ENCODE measurements at regions of chr10 and their contacts with region 1.

Region 1: DNA sequence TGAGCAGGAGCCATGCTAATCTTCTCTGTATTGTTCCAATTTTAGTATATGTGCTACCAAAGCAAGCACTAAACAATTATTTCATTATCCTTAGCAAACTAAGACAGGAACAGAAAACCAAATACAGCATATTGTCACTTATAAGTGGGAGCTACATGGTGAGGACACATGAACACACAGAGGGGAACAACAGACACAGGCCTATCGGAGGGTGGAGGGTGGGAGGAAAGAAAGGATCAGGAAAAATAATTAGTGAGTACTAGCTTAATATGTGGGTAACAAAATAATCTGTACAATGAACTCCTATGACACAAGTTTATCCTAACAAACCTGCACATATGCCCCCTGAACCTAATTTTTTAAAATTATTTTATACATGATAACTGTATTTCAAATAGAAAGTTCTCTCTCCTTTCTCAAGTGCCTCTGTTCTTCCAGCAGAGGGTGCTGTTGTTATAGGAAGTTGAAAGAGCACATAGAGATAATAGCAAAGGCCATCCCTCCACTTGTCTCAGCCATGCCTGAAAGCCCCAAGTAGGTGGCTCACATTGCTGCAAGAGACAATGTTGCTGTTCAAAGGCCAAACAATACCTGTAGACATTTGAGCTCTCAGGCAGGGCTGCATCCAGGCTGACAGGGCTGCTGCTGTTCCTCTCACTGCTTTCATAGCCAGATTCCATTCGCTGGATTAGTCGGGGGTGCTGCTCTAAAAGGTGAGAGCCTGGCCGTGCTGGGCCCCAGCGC is 33.4 kb upstream of the PPP3CB start:
- DNase-seq: peak; percentile 86 to 87
- H3K4me3 ChIP-seq: no peak overlapping the region
- H3K4me3 Mint-ChIP-seq: no peak overlapping the region
- H3K27ac Mint-ChIP-seq: no peak overlapping the region
- H3K4me1 ChIP-seq: peaks cover 3% of the 10 kb centered on the region; the same call in 1 of the 2 replicates
- H3K4me1 Mint-ChIP-seq: peaks cover 8% of the 10 kb centered on the region
- H3K27me3 ChIP-seq: no peaks in the 10 kb centered on the region
- H3K27me3 Mint-ChIP-seq: no peaks in the 10 kb centered on the region
- CTCF ChIP-seq: peak; percentile 89 to 92

Region 2: GRCh38 chr10:71835671-71836595 is 1693.3 kb before region 1 on chr10:
- CTCF ChIA-PET with region 1: interaction called, 8 read pairs
- POLR2A ChIA-PET with region 1: no interaction called
- intact Hi-C with region 1: loop called (anchors 1 kb)
- DNase-seq: no peak
- H3K4me3 ChIP-seq: no peak overlapping the region
- H3K4me3 Mint-ChIP-seq: no peak overlapping the region
- H3K27ac Mint-ChIP-seq: peak overlapping the region; percentile 46
- H3K4me1 ChIP-seq: peaks cover 56% of the 10 kb centered on the region
- H3K4me1 Mint-ChIP-seq: peaks cover 48% of the 10 kb centered on the region
- H3K27me3 ChIP-seq: no peaks in the 10 kb centered on the region
- H3K27me3 Mint-ChIP-seq: no peaks in the 10 kb centered on the region
- CTCF ChIP-seq: no peak

Region 3: DNA sequence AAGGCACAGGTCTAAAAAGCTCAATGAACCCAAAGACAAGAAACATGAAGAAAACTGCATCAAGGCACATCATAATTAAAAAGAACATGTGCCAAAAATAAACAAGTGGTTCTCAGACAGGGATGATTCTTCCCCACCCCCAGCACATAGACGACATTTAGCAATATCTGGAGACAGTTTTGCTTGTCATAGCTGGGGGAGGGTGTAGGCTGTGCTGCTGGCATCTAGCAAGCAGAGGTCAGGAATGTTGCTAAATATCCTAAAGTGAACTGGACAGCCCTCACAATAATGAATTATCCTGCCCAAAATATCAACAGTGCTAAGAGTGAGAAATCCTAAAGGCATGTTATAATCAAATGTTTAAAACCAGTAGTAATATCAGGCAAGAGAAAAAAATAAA is 1026.0 kb before region 1 on chr10:
- CTCF ChIA-PET with region 1: no interaction called
- POLR2A ChIA-PET with region 1: no interaction called
- intact Hi-C with region 1: no loop called
- DNase-seq: no peak
- H3K4me3 ChIP-seq: no peak overlapping the region
- H3K4me3 Mint-ChIP-seq: no peak overlapping the region
- H3K27ac Mint-ChIP-seq: no peak overlapping the region
- H3K4me1 ChIP-seq: no peaks in the 10 kb centered on the region
- H3K4me1 Mint-ChIP-seq: no peaks in the 10 kb centered on the region
- H3K27me3 ChIP-seq: no peaks in the 10 kb centered on the region
- H3K27me3 Mint-ChIP-seq: no peaks in the 10 kb centered on the region
- CTCF ChIP-seq: no peak

Region 4: DNA sequence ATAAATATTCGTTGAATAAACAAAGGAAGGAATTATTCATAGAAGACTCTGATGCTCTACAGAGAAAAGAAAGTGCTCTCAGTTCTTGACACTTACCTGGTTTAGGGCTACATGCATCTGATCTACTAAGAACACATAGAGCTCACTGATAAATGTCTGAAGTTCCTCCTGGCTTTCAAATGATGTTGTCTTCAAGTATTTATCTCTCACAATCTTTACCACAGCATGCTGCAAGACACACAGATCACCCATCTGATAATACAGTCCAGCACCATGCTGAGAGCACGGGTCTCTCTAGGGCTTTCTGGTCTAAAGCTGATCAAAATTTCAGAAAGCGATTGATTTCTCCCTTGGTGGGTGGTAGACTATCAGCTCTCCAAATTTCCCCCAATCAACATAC is 232.3 kb before region 1 on chr10:
- CTCF ChIA-PET with region 1: no interaction called
- POLR2A ChIA-PET with region 1: no interaction called
- intact Hi-C with region 1: no loop called
- DNase-seq: no peak
- H3K4me3 ChIP-seq: no peak overlapping the region
- H3K4me3 Mint-ChIP-seq: no peak overlapping the region
- H3K27ac Mint-ChIP-seq: no peak overlapping the region
- H3K4me1 ChIP-seq: no peaks in the 10 kb centered on the region
- H3K4me1 Mint-ChIP-seq: no peaks in the 10 kb centered on the region
- H3K27me3 ChIP-seq: no peaks in the 10 kb centered on the region
- H3K27me3 Mint-ChIP-seq: peaks cover 20% of the 10 kb centered on the region
- CTCF ChIP-seq: no peak

Region 5: DNA sequence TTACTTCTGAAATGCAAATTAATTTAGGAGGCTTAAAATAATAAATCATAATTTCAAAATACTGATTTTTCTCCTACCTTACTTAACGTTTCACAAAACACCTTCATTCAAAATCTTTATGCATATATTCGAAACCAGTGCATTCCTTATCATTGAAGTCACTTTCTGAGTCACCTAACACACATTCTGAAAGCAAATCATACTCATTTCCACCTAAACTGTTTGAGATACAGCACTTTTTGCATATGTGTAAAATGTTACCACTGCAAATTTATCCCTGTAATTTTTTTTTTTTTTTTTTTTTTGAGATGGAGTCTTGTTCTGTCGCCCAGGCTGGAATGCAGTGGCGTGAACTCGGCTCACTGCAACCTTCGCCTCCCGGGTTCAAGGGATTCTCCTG is 49.1 kb before region 1 on chr10:
- CTCF ChIA-PET with region 1: no interaction called
- POLR2A ChIA-PET with region 1: no interaction called
- intact Hi-C with region 1: no loop called
- DNase-seq: no peak
- H3K4me3 ChIP-seq: no peak overlapping the region
- H3K4me3 Mint-ChIP-seq: no peak overlapping the region
- H3K27ac Mint-ChIP-seq: no peak overlapping the region
- H3K4me1 ChIP-seq: no peaks in the 10 kb centered on the region
- H3K4me1 Mint-ChIP-seq: no peaks in the 10 kb centered on the region
- H3K27me3 ChIP-seq: no peaks in the 10 kb centered on the region
- H3K27me3 Mint-ChIP-seq: no peaks in the 10 kb centered on the region
- CTCF ChIP-seq: no peak

Region 6: GRCh38 chr10:73586583-73586984 is 57.3 kb after region 1 on chr10:
- CTCF ChIA-PET with region 1: interaction called, 18 read pairs
- POLR2A ChIA-PET with region 1: no interaction called
- intact Hi-C with region 1: loop called (anchors 1 kb)
- DNase-seq: peak; percentile 73 to 84
- H3K4me3 ChIP-seq: no peak overlapping the region
- H3K4me3 Mint-ChIP-seq: peak overlapping the region; percentile 37
- H3K27ac Mint-ChIP-seq: peak overlapping the region; percentile 39
- H3K4me1 ChIP-seq: peaks cover 47% of the 10 kb centered on the region
- H3K4me1 Mint-ChIP-seq: peaks cover 56% of the 10 kb centered on the region
- H3K27me3 ChIP-seq: no peaks in the 10 kb centered on the region
- H3K27me3 Mint-ChIP-seq: no peaks in the 10 kb centered on the region
- CTCF ChIP-seq: no peak

Region 7: GRCh38 chr10:73601486-73601921 is 72.2 kb after region 1 on chr10:
- CTCF ChIA-PET with region 1: interaction called, 12 read pairs
- POLR2A ChIA-PET with region 1: no interaction called
- intact Hi-C with region 1: no loop called
- DNase-seq: peak; percentile 77 to 81
- H3K4me3 ChIP-seq: no peak overlapping the region
- H3K4me3 Mint-ChIP-seq: peak overlapping the region; percentile 57
- H3K27ac Mint-ChIP-seq: peak overlapping the region; percentile 88
- H3K4me1 ChIP-seq: peaks cover 18% of the 10 kb centered on the region
- H3K4me1 Mint-ChIP-seq: peaks cover 12% of the 10 kb centered on the region
- H3K27me3 ChIP-seq: no peaks in the 10 kb centered on the region
- H3K27me3 Mint-ChIP-seq: no peaks in the 10 kb centered on the region
- CTCF ChIP-seq: no peak

Region 8: GRCh38 chr10:73634421-73634820 is 105.2 kb after region 1 on chr10:
- CTCF ChIA-PET with region 1: interaction called, 14 read pairs
- POLR2A ChIA-PET with region 1: no interaction called
- intact Hi-C with region 1: no loop called
- DNase-seq: no peak
- H3K4me3 ChIP-seq: no peak overlapping the region
- H3K4me3 Mint-ChIP-seq: no peak overlapping the region
- H3K27ac Mint-ChIP-seq: no peak overlapping the region
- H3K4me1 ChIP-seq: no peaks in the 10 kb centered on the region
- H3K4me1 Mint-ChIP-seq: no peaks in the 10 kb centered on the region
- H3K27me3 ChIP-seq: no peaks in the 10 kb centered on the region
- H3K27me3 Mint-ChIP-seq: no peaks in the 10 kb centered on the region
- CTCF ChIP-seq: no peak

Region 9: GRCh38 chr10:73650537-73651331 is 121.5 kb after region 1 on chr10:
- CTCF ChIA-PET with region 1: interaction called, 52 read pairs
- POLR2A ChIA-PET with region 1: no interaction called
- intact Hi-C with region 1: no loop called
- DNase-seq: no peak
- H3K4me3 ChIP-seq: no peak overlapping the region
- H3K4me3 Mint-ChIP-seq: no peak overlapping the region
- H3K27ac Mint-ChIP-seq: peak overlapping the region; percentile 61
- H3K4me1 ChIP-seq: peaks cover 41% of the 10 kb centered on the region
- H3K4me1 Mint-ChIP-seq: peaks cover 27% of the 10 kb centered on the region
- H3K27me3 ChIP-seq: no peaks in the 10 kb centered on the region
- H3K27me3 Mint-ChIP-seq: no peaks in the 10 kb centered on the region
- CTCF ChIP-seq: no peak

Measured in Caco-2 (cell line).